Pancreas (tissue), 10 donors: ENCODE measurements at regions of chr17 and their contacts with region 1.

Region 1: DNA sequence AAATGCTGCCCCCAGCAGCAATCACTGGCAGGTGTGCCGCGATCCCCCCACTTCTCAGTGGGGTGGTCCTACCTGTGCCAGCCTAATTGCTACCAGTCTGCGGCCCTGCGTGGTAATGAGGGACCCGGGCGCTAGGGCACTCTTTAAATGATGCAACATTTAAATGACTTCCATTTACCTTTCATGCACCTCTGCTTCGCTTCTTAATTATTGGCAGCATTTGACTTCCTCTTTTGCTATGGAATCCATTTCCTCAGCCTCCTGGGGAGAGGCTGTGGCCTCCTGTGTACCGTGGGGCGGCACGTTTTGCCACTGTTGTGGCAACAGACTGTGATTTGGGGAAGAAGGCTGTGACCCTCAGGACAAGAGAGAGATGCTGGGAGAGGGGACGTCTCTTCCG is 86.1 kb downstream of the RPA1 start:
- DNase-seq: peak in 1 of 6 donors; percentile 13
- ATAC-seq: no peak
- H3K4me3 ChIP-seq: no peak overlapping the region
- H3K27ac ChIP-seq: no peak overlapping the region
- H3K4me1 ChIP-seq: no peaks in the 10 kb centered on the region
- H3K27me3 ChIP-seq: no peaks in the 10 kb centered on the region
- CTCF ChIP-seq: no peak

Region 2: GRCh38 chr17:2029911-2030778 is 114.3 kb after region 1 on chr17 and contains the start of gene DPH1:
- intact Hi-C with region 1: loop called in 2 of 3 experiments (anchors 5 to 10 kb)
- DNase-seq: peak; percentile 84 to 96 (median 92)
- ATAC-seq: peak; percentile 87 to 92 (median 88)
- H3K4me3 ChIP-seq: peak within 1 kb of the TSS; percentile 96 to 100 (median 98)
- H3K27ac ChIP-seq: peak within 1 kb of the TSS in 3 of 4 donors; percentile 24 to 55 (median 45)
- H3K4me1 ChIP-seq: peaks cover 5 to 13% (median 6%) of the 10 kb centered on the region in 3 donors
- H3K27me3 ChIP-seq: no peaks in the 10 kb centered on the region
- CTCF ChIP-seq: peak in 1 of 4 donors; percentile 11
- total RNA-seq, gene DPH1: 21.8 to 37.7 (median 27.6) TPM